PC-3 (cell line): ENCODE measurements at regions of chr3 and their contacts with region 1.

Region 1: DNA sequence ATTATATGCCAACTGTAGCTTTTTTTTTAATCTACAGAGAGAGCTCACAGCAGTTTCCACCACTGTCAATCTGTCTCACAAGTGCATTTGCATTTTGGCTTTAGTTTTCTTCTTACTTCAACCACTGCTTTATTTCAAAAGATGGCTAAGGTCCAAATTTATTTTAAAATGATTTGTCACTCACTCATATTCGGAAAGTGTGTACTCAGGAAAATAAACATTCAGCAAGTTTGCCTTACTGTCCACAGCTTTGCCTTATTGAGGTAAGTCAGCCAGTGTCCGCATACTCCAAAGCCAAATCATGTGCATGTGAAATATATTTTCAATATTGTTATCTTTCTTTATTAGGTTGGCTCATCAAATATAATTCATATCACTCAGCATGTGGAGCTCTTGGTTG is 240.7 kb upstream of the ARHGEF26 start:
- DNase-seq: peak; percentile 68
- ATAC-seq: peak; percentile 84
- H3K4me3 ChIP-seq: peak overlapping the region; percentile 9; the same call in 1 of the 2 replicates
- H3K27ac ChIP-seq: peak overlapping the region; percentile 94
- H3K4me1 ChIP-seq: peaks cover 32% of the 10 kb centered on the region
- H3K27me3 ChIP-seq: no peaks in the 10 kb centered on the region
- CTCF ChIP-seq: no peak

Region 2: DNA sequence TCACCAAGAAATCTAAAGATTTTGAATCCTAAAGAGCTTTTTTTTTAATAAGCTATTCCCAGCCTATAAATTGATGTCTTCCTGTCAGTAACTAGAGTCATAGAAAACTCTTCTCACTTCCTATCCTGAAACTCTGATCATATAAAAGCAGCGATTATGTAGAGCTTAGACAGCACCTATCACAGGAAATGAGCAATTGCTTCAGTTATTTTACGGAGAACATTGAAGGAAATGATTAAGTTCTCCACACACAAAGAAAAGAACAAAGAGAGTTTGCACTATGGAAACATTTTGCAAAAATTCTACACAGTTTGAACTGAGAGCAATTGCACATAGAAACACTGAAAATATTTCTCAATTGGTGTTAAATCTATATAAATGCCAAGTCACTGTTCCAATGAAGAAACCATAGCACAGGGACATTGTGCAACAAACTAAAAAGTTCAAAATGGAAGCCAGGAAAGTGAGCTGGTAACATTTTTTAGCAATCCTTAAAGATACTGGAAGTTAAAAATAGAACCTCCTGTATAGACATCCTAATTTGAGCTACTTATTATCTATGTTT is 50.8 kb before region 1 on chr3:
- CTCF ChIA-PET with region 1: interaction called, 3 read pairs
- POLR2A ChIA-PET with region 1: no interaction called
- intact Hi-C with region 1: loop called (anchors 1 kb)
- DNase-seq: peak; percentile 74
- ATAC-seq: peak; percentile 91
- H3K4me3 ChIP-seq: no peak overlapping the region
- H3K27ac ChIP-seq: peak overlapping the region; percentile 77
- H3K4me1 ChIP-seq: peaks cover 32% of the 10 kb centered on the region
- H3K27me3 ChIP-seq: no peaks in the 10 kb centered on the region
- CTCF ChIP-seq: no peak

Region 3: GRCh38 chr3:153903430-153903829 is 22.9 kb after region 1 on chr3:
- CTCF ChIA-PET with region 1: no interaction called
- POLR2A ChIA-PET with region 1: no interaction called
- intact Hi-C with region 1: loop called (anchors 1 kb)
- DNase-seq: no peak
- ATAC-seq: no peak
- H3K4me3 ChIP-seq: no peak overlapping the region
- H3K27ac ChIP-seq: no peak overlapping the region
- H3K4me1 ChIP-seq: peaks cover 27% of the 10 kb centered on the region
- H3K27me3 ChIP-seq: no peaks in the 10 kb centered on the region
- CTCF ChIP-seq: peak; percentile 31; the same call in 1 of the 2 replicates